ENCODE measurements at regions of chr7 and their contacts with region 1.

Region 1: DNA sequence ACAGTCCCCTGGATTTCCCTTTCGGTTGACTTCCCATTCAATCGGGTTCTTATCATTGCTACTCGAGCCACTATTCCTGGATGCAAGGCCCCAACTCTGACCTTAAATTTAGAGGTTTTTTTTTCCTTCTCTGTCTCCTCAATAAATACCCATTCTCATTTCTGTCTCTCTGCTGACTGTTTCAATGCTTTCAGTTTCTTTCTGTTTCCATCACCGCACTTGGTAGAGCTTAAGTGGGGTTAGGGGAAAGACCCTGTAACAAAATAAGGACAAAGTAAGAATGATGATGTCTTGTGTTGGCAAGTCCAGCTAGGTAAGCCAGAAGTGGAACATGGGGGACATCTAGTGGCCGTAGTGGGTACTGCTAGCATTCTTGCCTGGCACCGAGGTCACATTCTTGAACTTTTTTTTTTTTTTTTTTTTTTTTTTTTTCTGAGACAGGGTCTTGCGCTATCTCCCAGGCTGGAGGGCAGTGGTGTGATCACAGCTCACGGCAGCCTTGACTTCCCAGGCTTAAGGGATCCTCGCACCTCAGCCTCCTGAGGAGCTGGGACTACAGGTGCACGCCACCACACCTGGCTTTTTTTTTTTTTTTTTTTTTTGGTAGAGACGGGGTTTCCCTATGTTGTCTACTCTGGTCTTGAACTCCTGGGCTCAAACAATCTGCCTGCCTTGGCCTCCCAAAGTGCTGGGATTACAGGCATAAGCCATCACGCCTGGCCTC is 40.3 kb downstream of the ZC3HC1 start:
- DNase-seq: peak; percentile 91
- ATAC-seq: 0 out of 2 replicates have a peak, but pooled peaks have one; percentile 3
- H3K4me3 ChIP-seq: no peak overlapping the region
- H3K27ac ChIP-seq: peak overlapping the region; percentile 98
- H3K4me1 ChIP-seq: peaks cover 26% of the 10 kb centered on the region
- H3K27me3 ChIP-seq: no peaks in the 10 kb centered on the region
- CTCF ChIP-seq: peak; percentile 88

Region 2: DNA sequence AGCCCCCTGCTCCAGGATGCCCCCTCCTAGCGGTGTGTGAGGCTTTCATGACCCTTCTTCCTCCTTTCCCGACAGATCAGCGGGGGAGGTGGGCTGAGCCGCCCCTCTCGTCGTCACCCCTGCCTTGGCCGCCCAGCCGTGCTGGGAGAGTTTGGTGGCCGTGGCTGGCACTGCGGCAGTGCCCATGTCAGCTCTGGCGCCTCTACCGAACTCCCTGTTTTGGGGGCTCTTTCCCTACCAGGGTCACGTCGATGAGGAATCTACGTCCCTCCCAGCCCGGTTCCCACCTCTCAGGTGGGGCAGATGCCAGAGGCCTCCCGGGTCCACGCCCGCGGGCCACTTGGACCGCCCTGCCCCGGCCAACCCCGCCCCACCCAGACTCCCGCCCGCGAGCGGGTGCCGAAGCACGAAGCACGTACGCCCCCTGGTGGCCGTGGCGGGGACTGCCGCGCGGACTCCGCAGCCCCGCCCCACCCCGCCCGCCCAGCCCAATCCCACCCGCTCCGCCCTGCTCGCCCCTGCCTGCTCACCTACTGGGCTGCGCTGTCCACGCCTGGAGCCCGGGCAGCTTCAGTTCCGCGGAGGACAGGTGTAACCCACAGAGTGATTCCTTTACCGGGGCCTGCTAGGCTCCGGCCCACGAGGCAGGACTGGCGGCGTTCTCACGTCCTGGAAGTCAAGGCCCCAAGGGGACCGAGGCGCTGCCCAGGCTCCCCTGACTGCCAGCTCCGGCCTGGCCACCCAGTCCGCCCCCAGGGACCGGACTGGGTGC is 185.2 kb before region 1 on chr7:
- CTCF ChIA-PET with region 1: interaction called, 5 read pairs
- POLR2A ChIA-PET with region 1: interaction called, 7 read pairs
- intact Hi-C with region 1: loop called (anchors 1 kb)
- DNase-seq: peak; percentile 90
- ATAC-seq: peak; percentile 63
- H3K4me3 ChIP-seq: peak overlapping the region; percentile 81
- H3K27ac ChIP-seq: peak overlapping the region; percentile 90
- H3K4me1 ChIP-seq: peaks cover 24% of the 10 kb centered on the region
- H3K27me3 ChIP-seq: no peaks in the 10 kb centered on the region
- CTCF ChIP-seq: peak; percentile 34

Region 3: DNA sequence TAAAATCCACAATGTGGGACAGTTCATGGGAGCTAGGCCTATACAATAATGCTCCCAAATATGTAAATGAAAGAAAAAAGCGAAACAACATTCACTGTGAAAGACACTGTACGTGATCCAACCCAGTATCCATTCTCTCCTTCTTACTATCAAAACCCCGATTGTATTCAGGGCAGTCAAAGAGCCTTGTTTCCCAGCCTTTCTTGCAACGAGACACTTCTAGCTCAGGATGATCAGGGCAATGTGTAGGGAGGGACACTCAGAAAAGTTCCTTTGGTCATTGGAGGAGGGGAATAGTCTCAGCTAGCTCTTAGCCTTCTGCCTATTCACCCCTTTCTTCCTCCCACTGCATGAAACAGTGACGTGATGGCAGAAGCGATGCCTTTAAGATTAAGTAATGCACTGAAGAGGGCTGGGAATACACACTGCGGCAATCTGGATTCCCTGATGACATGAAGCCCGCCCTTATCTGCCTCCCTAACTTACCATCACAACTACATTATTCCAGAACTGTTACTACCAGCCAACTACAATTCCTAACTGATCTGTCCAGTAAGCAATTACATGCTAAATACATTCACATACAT is 85.3 kb before region 1 on chr7:
- CTCF ChIA-PET with region 1: no interaction called
- POLR2A ChIA-PET with region 1: interaction called, 12 read pairs
- intact Hi-C with region 1: no loop called
- DNase-seq: no peak
- ATAC-seq: no peak
- H3K4me3 ChIP-seq: no peak overlapping the region
- H3K27ac ChIP-seq: no peak overlapping the region
- H3K4me1 ChIP-seq: peaks cover 14% of the 10 kb centered on the region
- H3K27me3 ChIP-seq: no peaks in the 10 kb centered on the region
- CTCF ChIP-seq: no peak

Region 4: DNA sequence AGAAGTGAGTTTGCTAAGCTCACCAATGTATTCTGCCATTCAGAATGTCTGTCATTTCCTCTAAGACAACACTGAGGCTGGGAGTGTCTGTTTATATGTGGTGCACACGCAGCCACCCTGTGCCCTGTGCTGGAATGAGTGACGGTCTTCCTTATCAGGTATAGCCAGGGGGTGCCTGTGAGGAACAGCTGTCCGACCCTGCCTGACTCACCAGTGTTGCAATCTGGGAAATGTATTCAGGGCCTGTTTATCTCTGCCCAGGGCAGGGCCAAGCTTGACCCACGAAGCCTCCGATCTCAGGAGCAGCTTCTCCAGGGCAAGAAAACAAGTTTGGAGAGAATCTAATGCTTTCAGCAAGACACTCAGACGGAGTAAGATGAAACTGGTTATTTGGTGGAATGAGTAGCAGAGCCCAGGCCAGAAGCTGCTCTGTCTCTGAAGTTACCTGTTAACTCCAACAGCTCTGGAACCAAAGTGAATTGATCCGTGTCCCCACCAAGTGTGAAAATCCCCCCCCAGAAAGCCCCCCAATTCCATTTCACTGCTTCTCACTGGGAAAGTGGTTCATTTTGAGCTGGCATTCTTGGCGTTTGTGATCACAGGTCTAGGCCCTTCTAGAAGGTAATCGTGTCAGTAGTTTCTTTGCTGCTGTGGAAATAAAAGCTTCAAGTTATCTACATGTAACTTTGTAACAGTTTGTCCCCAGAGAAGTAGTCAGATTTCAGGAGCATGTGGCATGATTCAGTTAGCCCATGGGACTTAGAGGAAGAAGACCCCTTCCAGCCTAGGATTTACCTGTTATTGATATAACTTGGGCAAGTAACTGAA is 52.0 kb before region 1 on chr7:
- CTCF ChIA-PET with region 1: no interaction called
- POLR2A ChIA-PET with region 1: interaction called, 7 read pairs
- intact Hi-C with region 1: loop called (anchors 2 kb)
- DNase-seq: peak; percentile 90
- ATAC-seq: peak; percentile 99
- H3K4me3 ChIP-seq: peak overlapping the region; percentile 10; the same call in 1 of the 2 replicates
- H3K27ac ChIP-seq: peak overlapping the region; percentile 87
- H3K4me1 ChIP-seq: peaks cover 28% of the 10 kb centered on the region
- H3K27me3 ChIP-seq: no peaks in the 10 kb centered on the region
- CTCF ChIP-seq: no peak

Region 5: DNA sequence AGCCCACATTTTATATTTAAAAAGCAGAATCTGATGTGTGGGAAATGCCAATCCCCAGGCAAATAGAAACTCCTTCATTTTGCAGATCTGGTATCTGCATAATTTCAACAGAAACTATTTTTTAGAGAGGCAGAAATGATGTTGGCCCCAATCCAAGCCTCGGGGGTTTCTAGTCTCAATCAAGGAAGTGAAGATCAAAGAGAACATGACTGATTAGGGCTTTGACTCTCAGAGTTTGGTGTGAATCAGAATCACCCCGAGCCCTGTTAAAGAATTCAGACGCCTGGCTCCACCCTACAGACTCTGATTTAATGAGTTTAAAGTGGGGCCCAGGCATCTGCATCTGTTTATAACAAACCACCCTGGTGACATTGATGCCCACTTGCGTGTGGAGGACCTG is 21.4 kb before region 1 on chr7:
- CTCF ChIA-PET with region 1: interaction called, 4 read pairs
- POLR2A ChIA-PET with region 1: interaction called, 16 read pairs
- intact Hi-C with region 1: no loop called
- DNase-seq: no peak
- ATAC-seq: no peak
- H3K4me3 ChIP-seq: no peak overlapping the region
- H3K27ac ChIP-seq: no peak overlapping the region
- H3K4me1 ChIP-seq: peaks cover 4% of the 10 kb centered on the region; the same call in 1 of the 2 replicates
- H3K27me3 ChIP-seq: no peaks in the 10 kb centered on the region
- CTCF ChIP-seq: no peak

Measured in PC-3 (cell line).